CD8-positive, alpha-beta T cell (primary cell): ENCODE measurements at regions of chr6 and their contacts with region 1.

Region 1: DNA sequence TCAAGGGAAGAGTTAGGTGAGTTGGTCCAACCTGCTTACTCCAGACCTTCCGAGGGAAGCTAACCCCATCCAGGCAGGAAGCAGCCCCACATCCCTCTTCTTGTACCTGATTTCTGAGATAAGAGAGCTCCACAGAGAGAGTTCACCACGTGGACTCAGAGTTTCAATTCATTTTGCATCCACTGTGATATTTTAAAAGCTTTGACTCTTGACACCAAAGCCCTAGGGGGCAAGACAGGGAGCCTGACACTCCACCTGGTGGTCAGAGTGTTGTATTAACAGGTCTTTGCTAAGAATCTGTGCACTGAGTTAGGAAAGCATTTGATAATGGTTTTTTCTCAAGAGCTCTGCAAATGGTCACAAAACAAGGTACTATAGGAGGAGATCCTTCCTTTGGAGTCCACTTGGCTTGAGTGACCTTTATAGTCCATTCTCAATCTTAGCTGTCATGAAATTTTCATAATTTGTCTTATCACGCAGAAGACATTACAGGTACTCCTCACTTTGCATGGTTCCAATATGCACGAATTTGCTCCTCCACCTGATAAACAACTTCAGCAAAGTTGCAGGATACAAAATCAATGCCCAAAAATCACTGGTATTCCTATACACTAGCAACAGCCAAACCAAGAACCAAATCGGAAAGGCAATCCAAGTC is 56.2 kb upstream of the RIPOR2 start:
- DNase-seq: peak; percentile 48 to 90 (median 75)
- ATAC-seq: peak; percentile 92
- H3K4me3 ChIP-seq: peak overlapping the region; percentile 5 to 15
- H3K4me3 Mint-ChIP-seq: peak overlapping the region; percentile 68
- H3K27ac ChIP-seq: peak overlapping the region; percentile 14 to 55
- H3K27ac Mint-ChIP-seq: peak overlapping the region; percentile 93
- H3K4me1 ChIP-seq: peaks cover 40% of the 10 kb centered on the region
- H3K4me1 Mint-ChIP-seq: peaks cover 74% of the 10 kb centered on the region
- H3K27me3 ChIP-seq: no peaks in the 10 kb centered on the region
- H3K27me3 Mint-ChIP-seq: no peaks in the 10 kb centered on the region
- CTCF ChIP-seq: peak; percentile 83

Region 2: GRCh38 chr6:24848461-24848860 is 143.5 kb before region 1 on chr6:
- CTCF ChIA-PET with region 1: interaction called, 19 read pairs
- POLR2A ChIA-PET with region 1: no interaction called
- intact Hi-C with region 1: no loop called
- DNase-seq: no peak
- ATAC-seq: no peak
- H3K4me3 ChIP-seq: no peak overlapping the region
- H3K4me3 Mint-ChIP-seq: no peak overlapping the region
- H3K27ac ChIP-seq: no peak overlapping the region
- H3K27ac Mint-ChIP-seq: peak overlapping the region; percentile 87
- H3K4me1 ChIP-seq: peaks cover 12% of the 10 kb centered on the region
- H3K4me1 Mint-ChIP-seq: peaks cover 49% of the 10 kb centered on the region
- H3K27me3 ChIP-seq: no peaks in the 10 kb centered on the region
- H3K27me3 Mint-ChIP-seq: no peaks in the 10 kb centered on the region
- CTCF ChIP-seq: no peak

Region 3: DNA sequence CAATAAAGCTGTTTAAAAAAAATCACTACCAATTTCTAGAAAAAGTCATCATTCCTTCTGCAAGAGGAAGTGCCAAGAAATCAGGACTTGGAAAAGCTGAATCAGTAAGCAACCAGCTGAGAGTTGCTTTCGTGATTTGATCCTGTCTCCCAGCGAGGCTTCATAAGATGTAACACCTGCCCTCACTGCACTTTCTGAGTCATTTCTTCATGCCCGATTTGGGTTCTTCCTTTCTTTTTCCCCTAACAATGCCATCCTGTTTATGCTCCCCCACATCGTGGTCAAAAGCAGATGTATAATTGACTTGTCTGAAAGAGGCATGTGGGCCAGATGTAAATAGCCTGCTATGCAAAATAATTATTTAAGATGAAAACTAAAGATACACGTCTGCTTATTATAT is 108.3 kb before region 1 on chr6:
- CTCF ChIA-PET with region 1: interaction called, 23 read pairs
- POLR2A ChIA-PET with region 1: interaction called, 4 read pairs
- intact Hi-C with region 1: no loop called
- DNase-seq: peak in 2 of 9 experiments; percentile 33 to 48
- ATAC-seq: peak; percentile 60
- H3K4me3 ChIP-seq: no peak overlapping the region
- H3K4me3 Mint-ChIP-seq: peak overlapping the region; percentile 67
- H3K27ac ChIP-seq: peak overlapping the region in 1 of 2 experiments; percentile 52
- H3K27ac Mint-ChIP-seq: peak overlapping the region; percentile 94
- H3K4me1 ChIP-seq: peaks cover 84% of the 10 kb centered on the region
- H3K4me1 Mint-ChIP-seq: peaks cover 87% of the 10 kb centered on the region
- H3K27me3 ChIP-seq: no peaks in the 10 kb centered on the region
- H3K27me3 Mint-ChIP-seq: no peaks in the 10 kb centered on the region
- CTCF ChIP-seq: no peak

Region 4: DNA sequence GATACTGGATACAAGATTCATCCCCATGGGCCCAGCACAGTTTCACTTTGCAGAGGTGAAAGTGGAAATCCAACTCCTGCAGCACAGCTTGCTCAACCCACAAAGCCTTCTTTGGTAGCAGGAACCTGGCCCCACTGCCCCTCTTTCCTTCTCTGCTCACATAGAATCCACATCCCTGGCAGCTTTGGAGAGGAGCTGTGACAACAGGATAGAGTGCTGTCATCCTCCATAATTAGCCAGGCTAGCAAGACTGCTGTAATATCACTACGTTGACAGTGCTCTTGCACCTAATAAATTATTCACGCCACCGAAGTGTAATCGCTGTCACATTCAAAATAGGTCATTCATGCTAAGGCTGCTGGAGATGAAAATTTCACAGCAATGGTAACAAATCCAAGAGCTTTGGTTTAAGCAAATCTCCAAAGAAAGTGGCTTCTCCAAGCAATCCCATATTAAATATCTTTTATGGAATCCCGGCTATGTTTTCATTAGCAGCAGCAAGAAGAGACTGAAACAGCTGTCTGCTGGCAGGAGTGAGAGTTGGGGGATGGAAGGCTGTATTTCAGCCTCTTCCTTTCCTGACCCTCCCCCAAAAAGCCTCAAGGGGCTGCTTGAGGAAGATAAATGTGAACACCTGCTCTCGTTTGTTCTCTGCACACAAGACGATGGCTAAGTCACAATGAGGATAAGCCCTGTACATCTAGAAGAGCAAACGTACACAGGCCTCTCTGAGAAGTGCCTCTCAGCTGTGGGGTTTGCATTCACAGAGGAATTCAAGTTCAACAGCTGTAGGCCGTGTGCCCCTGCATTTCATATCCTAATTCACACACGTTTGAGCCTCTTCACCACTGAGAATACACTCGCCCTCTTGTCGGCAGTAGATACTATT is 72.7 kb before region 1 on chr6:
- CTCF ChIA-PET with region 1: interaction called, 176 read pairs
- POLR2A ChIA-PET with region 1: interaction called, 16 read pairs
- intact Hi-C with region 1: no loop called
- DNase-seq: peak in 1 of 9 experiments; percentile 53
- ATAC-seq: peak; percentile 36
- H3K4me3 ChIP-seq: peak overlapping the region; percentile 2 to 29
- H3K4me3 Mint-ChIP-seq: peak overlapping the region; percentile 69
- H3K27ac ChIP-seq: peak overlapping the region; percentile 2 to 51
- H3K27ac Mint-ChIP-seq: peak overlapping the region; percentile 92
- H3K4me1 ChIP-seq: peaks cover 94% of the 10 kb centered on the region
- H3K4me1 Mint-ChIP-seq: peaks cover 92% of the 10 kb centered on the region
- H3K27me3 ChIP-seq: no peaks in the 10 kb centered on the region
- H3K27me3 Mint-ChIP-seq: no peaks in the 10 kb centered on the region
- CTCF ChIP-seq: no peak

Region 5: DNA sequence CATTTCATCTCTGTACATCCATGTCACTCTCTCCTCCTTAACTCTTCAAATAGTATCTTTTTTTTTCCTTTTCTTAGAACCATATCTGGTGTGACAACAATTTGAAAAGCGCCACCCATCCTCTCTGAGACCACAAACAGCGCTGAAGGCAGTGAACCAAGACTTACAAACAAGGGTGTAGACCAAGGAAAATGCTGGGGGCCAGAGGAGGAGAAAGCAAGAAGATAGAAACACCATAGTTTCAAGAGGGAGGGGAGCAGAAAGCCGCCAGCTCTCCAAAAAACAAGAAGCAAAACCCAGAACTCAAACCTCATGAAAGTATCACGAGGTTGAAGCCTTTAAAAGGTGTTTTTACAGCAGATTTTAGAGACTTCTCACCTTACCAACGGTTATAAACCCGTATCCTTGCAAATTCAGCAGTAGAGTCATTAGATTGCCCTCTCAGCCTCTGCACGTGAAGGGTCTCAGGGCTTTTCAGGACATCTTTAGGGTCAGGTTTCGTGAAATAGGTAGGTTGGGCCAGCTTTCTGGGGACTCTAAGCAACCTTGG is 42.8 kb before region 1 on chr6:
- CTCF ChIA-PET with region 1: interaction called, 109 read pairs
- POLR2A ChIA-PET with region 1: interaction called, 67 read pairs
- intact Hi-C with region 1: loop called (anchors 1 to 5 kb)
- DNase-seq: peak in 7 of 9 experiments; percentile 47 to 89 (median 73)
- ATAC-seq: peak; percentile 55
- H3K4me3 ChIP-seq: peak overlapping the region; percentile 9 to 38
- H3K4me3 Mint-ChIP-seq: peak overlapping the region; percentile 69
- H3K27ac ChIP-seq: peak overlapping the region; percentile 50 to 76
- H3K27ac Mint-ChIP-seq: peak overlapping the region; percentile 91
- H3K4me1 ChIP-seq: peaks cover 69% of the 10 kb centered on the region
- H3K4me1 Mint-ChIP-seq: peaks cover 74% of the 10 kb centered on the region
- H3K27me3 ChIP-seq: no peaks in the 10 kb centered on the region
- H3K27me3 Mint-ChIP-seq: no peaks in the 10 kb centered on the region
- CTCF ChIP-seq: no peak

Region 6: DNA sequence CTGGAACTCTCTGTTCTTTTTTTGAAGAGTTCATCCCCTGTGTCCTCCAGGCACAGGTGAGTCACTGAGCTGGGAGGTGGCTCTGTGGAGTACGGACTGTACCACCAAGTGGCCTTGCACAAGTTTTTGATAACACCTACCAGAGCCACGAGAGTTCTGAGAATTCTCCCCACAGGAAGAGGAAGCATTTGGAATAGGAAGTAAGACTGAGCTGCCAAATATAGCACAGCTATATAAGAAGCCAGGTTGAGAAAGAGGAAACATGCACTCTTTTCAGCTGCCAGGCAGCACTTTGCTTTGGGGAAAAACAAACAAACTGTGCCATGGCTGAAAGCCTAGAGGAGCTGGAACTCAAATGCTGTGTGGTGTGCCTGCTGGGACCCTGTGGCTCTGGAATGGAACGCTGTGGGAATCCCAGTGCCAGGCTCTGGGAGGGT is 14.6 kb after region 1 on chr6:
- CTCF ChIA-PET with region 1: interaction called, 18 read pairs
- POLR2A ChIA-PET with region 1: interaction called, 9 read pairs
- intact Hi-C with region 1: no loop called
- DNase-seq: peak in 5 of 9 experiments; percentile 29 to 66 (median 43)
- ATAC-seq: peak; percentile 63
- H3K4me3 ChIP-seq: peak overlapping the region in 1 of 2 experiments; percentile 3
- H3K4me3 Mint-ChIP-seq: peak overlapping the region; percentile 20
- H3K27ac ChIP-seq: peak overlapping the region; percentile 29 to 85
- H3K27ac Mint-ChIP-seq: peak overlapping the region; percentile 84
- H3K4me1 ChIP-seq: peaks cover 64% of the 10 kb centered on the region
- H3K4me1 Mint-ChIP-seq: peaks cover 78% of the 10 kb centered on the region
- H3K27me3 ChIP-seq: no peaks in the 10 kb centered on the region
- H3K27me3 Mint-ChIP-seq: no peaks in the 10 kb centered on the region
- CTCF ChIP-seq: no peak

Region 7: GRCh38 chr6:25107218-25107617 is 115.3 kb after region 1 on chr6:
- CTCF ChIA-PET with region 1: no interaction called
- POLR2A ChIA-PET with region 1: no interaction called
- intact Hi-C with region 1: no loop called
- DNase-seq: no peak
- ATAC-seq: no peak
- H3K4me3 ChIP-seq: no peak overlapping the region
- H3K4me3 Mint-ChIP-seq: no peak overlapping the region
- H3K27ac ChIP-seq: no peak overlapping the region
- H3K27ac Mint-ChIP-seq: no peak overlapping the region
- H3K4me1 ChIP-seq: no peaks in the 10 kb centered on the region
- H3K4me1 Mint-ChIP-seq: no peaks in the 10 kb centered on the region
- H3K27me3 ChIP-seq: no peaks in the 10 kb centered on the region
- H3K27me3 Mint-ChIP-seq: no peaks in the 10 kb centered on the region
- CTCF ChIP-seq: no peak

Region 8: DNA sequence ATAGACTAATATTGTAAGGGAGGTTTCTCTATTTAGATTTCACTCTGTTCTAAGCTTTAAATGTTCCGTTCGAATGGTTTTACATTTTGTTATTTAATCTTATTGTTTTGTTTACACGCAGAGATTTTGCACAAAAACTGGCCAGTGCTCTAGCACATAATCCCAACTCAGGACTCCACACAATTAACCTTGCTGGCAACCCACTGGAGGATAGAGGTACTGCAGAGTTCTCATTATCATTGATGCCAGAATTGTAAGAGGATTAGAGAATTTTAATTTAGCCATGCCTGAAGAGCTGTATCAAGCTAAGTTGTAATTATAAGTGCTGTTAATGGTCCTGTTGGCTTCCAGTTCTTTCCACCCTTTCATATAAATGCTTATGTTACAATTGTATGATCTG is 480.4 kb after region 1 on chr6:
- CTCF ChIA-PET with region 1: no interaction called
- POLR2A ChIA-PET with region 1: no interaction called
- intact Hi-C with region 1: no loop called
- DNase-seq: no peak
- ATAC-seq: no peak
- H3K4me3 ChIP-seq: no peak overlapping the region
- H3K4me3 Mint-ChIP-seq: no peak overlapping the region
- H3K27ac ChIP-seq: no peak overlapping the region
- H3K27ac Mint-ChIP-seq: no peak overlapping the region
- H3K4me1 ChIP-seq: no peaks in the 10 kb centered on the region
- H3K4me1 Mint-ChIP-seq: no peaks in the 10 kb centered on the region
- H3K27me3 ChIP-seq: no peaks in the 10 kb centered on the region
- H3K27me3 Mint-ChIP-seq: no peaks in the 10 kb centered on the region
- CTCF ChIP-seq: peak; percentile 43

Region 9: DNA sequence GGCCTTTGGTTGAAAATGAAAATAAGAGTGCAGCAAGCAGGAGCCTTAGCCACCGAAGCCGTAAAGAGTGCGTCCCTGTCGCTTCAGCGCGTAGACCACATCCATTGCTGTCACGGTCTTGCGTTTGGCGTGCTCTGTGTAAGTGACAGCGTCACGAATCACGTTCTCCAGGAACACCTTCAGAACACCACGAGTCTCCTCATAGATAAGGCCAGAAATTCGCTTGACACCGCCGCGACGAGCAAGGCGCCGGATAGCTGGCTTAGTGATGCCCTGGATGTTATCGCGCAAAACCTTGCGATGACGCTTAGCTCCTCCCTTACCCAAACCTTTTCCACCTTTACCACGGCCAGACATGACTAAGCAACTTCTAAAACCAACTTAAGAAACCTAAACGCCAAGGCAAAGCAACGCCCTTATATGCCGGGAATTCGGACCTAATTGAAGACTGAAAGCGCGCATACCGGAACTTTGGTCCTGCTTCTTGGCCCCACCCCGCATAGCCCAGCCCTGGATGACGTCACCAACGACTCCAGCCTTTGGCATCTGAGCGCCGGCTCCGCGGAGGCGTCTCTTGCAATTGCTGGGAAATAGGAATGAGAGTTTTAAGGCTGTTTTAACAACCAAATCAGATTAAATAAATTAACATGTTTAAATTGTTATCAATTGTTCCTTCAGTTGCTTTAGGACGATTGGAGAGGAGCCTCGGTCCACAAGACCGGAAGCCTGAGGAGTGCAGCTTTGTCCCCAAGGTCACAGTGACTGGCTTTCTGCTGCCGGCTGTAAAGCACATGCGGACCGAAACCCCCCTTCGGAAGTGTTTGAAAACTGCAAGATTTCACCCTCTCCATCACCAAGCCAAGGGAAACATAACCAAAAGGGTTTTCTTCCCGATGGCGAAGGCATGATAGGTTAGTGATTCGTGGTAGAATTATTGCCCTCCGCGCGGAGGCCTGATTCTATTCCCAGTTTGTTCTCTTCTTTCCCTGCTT is 1293.5 kb after region 1 on chr6:
- CTCF ChIA-PET with region 1: no interaction called
- POLR2A ChIA-PET with region 1: no interaction called
- intact Hi-C with region 1: no loop called
- DNase-seq: peak; percentile 83 to 99 (median 96)
- ATAC-seq: peak; percentile 82
- H3K4me3 ChIP-seq: peak overlapping the region; percentile 73 to 76
- H3K4me3 Mint-ChIP-seq: peak overlapping the region; percentile 91
- H3K27ac ChIP-seq: peak overlapping the region; percentile 89 to 96
- H3K27ac Mint-ChIP-seq: peak overlapping the region; percentile 97
- H3K4me1 ChIP-seq: peaks cover 14% of the 10 kb centered on the region
- H3K4me1 Mint-ChIP-seq: peaks cover 31% of the 10 kb centered on the region
- H3K27me3 ChIP-seq: no peaks in the 10 kb centered on the region
- H3K27me3 Mint-ChIP-seq: no peaks in the 10 kb centered on the region
- CTCF ChIP-seq: no peak